ENCODE measurements at regions of chr14 and their contacts with region 1.

Region 1: DNA sequence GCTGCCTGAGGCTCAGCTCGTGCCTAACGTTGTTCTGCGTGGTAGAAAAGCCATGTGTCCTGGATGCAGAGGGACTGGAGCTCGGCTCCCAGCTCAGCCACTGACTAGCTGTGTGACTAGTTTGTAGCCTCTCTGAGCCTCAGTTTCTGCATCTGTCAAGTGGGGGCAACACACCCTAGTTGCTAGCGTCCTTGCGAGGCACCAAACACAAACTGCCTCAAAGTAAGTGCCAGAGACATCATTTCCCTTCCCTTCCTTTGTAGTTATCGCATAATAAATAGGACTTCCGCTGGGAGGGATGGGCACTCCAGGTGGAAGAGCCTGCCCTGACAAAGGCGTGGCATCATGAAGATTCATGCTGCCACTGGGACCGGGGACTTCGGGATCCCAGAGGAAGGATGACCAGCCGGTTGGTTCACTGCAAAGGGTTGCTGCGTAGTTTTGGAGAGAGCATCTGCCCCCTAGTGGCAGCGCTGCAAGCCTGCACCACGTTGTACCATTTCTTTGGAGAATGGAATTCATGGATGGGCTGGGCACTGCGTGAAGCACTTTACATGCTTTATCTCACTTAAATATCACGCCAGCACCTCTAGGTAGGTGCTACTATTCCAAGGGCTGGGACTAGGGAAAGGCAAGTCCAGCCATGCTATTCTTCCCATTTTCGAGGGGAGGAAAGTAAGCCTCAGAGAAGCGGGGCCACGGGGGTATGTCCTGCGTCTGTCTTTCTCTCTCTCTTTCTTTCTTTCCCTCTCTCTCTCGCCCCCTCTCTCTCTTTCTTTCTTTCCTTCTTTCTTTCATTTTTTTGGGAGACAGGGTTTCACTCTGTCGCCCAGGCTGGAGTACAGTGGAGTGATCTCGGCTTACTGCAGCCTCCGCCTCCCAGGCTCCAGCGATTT is 4.6 kb downstream of the CCDC197 start:
- DNase-seq: peak; percentile 70
- ATAC-seq: peak; percentile 79

Region 2: DNA sequence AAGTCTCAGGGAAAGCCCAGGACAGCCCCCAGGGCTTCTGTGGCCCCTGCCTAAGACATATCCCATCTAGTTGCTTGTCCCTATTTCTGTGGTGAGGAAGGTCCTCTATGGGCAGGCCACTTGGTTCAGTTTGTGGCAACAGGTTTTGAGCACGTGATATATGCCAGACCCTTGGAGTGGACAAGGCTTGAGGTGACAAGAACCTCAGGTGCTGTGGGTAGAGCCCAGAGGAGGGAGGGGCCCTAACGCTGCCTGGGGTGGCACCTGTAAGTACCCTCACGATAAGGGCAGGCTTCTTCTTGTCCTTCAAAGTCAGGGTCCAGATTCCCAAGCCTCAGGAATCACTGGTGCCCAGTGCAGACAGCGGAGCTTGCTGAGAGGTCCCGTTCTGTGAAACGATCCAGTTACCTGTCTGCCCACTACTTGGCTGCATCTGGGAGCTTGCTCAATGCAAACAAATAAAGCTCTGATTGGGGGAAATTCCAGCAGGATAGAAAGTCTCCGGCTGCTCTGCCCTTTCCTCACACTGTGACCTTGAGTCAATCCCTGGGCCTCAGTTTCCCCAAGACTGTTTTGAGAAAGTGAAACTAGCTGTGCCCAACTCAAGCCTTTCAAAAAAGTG is 122.3 kb before region 1 on chr14:
- intact Hi-C with region 1: no loop called
- DNase-seq: no peak
- ATAC-seq: no peak

Region 3: GRCh38 chr14:93939304-93940229 is 62.2 kb before region 1 on chr14:
- intact Hi-C with region 1: loop called (anchors 2 kb)
- DNase-seq: peak; percentile 91
- ATAC-seq: peak; percentile 71

Measured in Right ventricle myocardium inferior (tissue), 1 donor.